HAP-1 (cell line): ENCODE measurements at regions of chr17 and their contacts with region 1.

Region 1: GRCh38 chr17:36486204-36487194 is at the start of gene ZNHIT3:
- DNase-seq: peak; percentile 93
- H3K4me3 ChIP-seq: peak within 1 kb of the TSS; percentile 66
- H3K4me1 ChIP-seq: peaks cover 6% of the 10 kb centered on the region
- H3K27me3 ChIP-seq: peaks cover 6% of the 10 kb centered on the region

Region 2: DNA sequence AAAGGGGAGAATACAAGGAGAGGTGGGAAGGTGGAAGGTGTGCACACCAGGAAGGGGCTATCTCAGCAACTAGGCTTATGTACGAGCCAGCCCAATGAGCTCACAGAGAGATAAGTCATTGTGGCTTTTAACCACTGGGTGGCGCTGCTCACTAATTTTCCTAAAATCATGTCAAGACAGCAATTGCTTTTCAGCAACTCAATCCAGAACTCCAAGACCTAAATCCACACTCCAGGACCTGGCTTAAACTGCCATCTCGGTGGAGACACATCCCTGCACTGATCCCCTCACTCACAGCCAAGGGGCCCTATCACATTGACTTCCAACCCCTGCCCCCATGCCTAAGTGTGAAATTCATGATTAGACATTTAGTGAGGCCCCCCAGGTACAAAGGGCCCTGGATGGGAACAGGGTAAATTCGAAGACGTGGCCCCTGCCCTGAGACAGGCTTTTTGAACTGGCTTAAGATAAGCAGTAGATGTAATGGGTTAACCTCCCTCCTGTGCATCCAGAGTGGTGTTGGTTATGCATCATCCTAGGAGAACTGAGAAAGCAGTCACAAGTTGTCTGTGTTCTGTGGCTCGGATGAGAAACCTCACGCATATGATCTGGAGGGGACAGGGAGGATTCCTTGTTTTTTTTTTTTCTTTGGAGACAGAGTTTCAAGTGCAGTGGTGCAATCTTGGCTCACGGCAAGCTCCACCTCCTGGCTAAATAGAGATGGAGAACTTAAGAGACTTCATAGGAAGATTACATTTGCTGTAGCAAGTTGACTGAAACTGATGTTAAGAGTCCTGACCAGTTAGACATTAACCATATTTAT is 516.7 kb before region 1 on chr17:
- in situ Hi-C with region 1: loop called (anchors 10 kb)
- DNase-seq: peak; percentile 68 to 87
- H3K4me3 ChIP-seq: no peak overlapping the region
- H3K4me1 ChIP-seq: no peaks in the 10 kb centered on the region
- H3K27me3 ChIP-seq: no peaks in the 10 kb centered on the region

Region 3: DNA sequence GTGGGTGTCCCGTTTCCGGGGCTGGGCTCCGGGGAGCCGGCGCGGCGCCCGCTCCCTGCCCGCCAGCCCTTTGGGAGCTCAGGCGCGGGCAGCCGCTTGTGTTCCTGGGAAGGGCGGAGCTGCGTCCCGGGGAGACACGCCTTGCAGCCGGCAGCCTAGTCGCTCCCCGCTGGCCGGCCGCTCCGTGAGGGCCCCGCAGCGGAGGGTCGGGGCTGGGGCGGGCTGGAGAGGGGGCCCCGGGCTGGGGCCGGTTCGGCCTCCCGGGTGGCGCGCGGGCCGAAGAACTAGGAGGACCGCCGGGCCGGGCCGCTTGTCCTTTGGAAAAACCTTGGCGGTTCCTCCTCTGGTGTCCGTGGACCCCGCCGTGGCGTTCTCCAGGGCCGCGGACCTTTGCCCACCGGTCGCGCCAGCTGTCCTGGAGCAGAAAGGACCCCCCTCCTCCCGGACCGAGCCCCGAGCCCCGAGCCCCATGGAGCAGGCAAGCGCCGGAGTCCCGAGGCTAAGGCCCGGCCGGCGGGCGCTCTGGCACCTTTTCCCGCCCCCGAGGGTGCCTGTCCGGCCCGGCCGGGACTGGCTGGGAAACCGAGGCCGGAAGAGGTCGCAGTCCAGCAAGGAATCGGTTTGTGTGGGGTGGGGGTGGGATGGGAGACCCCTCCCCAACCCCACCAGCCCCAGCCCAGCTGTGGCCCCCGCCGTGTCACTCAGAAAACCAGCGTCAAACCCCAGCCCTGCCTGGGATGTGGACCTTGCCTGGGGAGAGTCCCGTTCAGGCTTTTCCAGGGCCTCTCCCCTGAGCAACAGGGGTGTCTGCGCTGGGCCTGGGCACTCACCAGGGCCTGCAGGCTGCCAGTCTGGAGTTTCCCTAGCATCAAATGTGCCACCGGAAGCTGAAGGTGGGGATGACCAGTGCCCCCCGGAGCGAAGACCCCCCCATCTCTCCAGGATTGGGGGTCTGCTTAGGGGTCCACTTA is 303.2 kb before region 1 on chr17:
- in situ Hi-C with region 1: loop called (anchors 25 kb)
- DNase-seq: peak; percentile 43 to 79
- H3K4me3 ChIP-seq: peak overlapping the region; percentile 45
- H3K4me1 ChIP-seq: no peaks in the 10 kb centered on the region; the same call in 1 of the 2 replicates
- H3K27me3 ChIP-seq: no peaks in the 10 kb centered on the region

Region 4: GRCh38 chr17:36550491-36551417 is 64.3 kb after region 1 on chr17:
- in situ Hi-C with region 1: no loop called
- DNase-seq: no peak
- H3K4me3 ChIP-seq: no peak overlapping the region
- H3K4me1 ChIP-seq: peaks cover 29% of the 10 kb centered on the region
- H3K27me3 ChIP-seq: no peaks in the 10 kb centered on the region